Caco-2 (cell line): ENCODE measurements at regions of chrX and their contacts with region 1.

Region 1: GRCh38 chrX:17706676-17707075 is 30.6 kb upstream of the SCML1 start:
- DNase-seq: peak; percentile 40 to 50
- H3K4me3 ChIP-seq: no peak overlapping the region
- H3K4me3 Mint-ChIP-seq: no peak overlapping the region
- H3K27ac Mint-ChIP-seq: no peak overlapping the region
- H3K4me1 ChIP-seq: 0 out of 2 replicates have a peak, but pooled peaks cover 5% of the 10 kb centered on the region
- H3K4me1 Mint-ChIP-seq: peaks cover 11% of the 10 kb centered on the region
- H3K27me3 ChIP-seq: no peaks in the 10 kb centered on the region
- H3K27me3 Mint-ChIP-seq: no peaks in the 10 kb centered on the region
- CTCF ChIP-seq: no peak

Region 2: DNA sequence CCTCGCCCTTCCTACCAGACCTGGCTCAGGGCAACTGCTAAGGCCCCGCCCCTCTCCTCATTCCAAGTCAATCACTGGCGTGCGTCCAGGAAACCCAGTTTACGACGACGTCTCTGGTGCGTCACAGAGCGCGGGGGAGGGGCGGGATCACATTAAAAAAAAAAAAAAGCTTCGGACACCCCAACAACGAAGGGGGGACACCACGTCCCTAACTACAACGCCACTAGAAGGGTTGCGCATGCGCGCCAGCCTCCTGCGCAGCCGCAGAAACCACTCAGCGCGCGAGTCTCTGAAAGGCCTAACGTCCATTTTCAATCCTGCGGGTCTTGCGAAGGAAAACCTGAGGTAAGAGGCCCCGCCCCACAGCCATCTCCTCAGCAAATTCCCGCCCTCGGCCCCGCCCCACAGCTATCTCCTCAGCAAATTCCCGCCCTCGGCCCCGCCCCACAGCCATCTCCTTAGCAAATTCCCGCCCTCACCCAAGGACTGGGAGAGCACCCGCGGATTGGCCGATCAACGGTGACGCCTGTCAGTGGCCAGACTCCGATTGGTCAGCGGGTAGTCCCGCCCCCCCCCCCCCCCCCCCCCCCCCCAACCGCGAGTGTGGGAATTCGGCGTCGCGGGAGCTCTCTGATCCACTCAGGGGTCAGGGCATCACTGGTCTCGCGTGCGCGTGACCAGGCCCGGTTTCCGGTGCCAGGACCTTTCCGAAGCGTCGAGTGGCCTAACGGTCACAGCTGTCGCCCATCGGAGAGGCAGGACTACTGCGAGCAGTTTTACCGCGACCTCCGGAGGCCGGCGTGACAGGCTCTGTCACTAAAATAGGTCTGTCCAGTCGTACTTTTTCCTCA is 30.4 kb after region 1 on chrX and contains the start of gene SCML1:
- CTCF ChIA-PET with region 1: no interaction called
- POLR2A ChIA-PET with region 1: interaction called, 15 read pairs
- intact Hi-C with region 1: loop called (anchors 5 kb)
- DNase-seq: peak; percentile 93 to 97
- H3K4me3 ChIP-seq: peak within 1 kb of the TSS; percentile 78
- H3K4me3 Mint-ChIP-seq: peak within 1 kb of the TSS; percentile 89
- H3K27ac Mint-ChIP-seq: peak within 1 kb of the TSS; percentile 89
- H3K4me1 ChIP-seq: no peaks in the 10 kb centered on the region
- H3K4me1 Mint-ChIP-seq: no peaks in the 10 kb centered on the region
- H3K27me3 ChIP-seq: no peaks in the 10 kb centered on the region
- H3K27me3 Mint-ChIP-seq: no peaks in the 10 kb centered on the region
- CTCF ChIP-seq: no peak
- total RNA-seq, gene SCML1: 16.4 and 17.5 TPM in 2 replicates